Endothelial cell of umbilical vein (primary cell): ENCODE measurements at regions of chr1 and their contacts with region 1.

Region 1: GRCh38 chr1:32981003-32981901 is 16.6 kb upstream of the RNF19B start:
- DNase-seq: peak; percentile 96
- H3K4me3 ChIP-seq: no peak overlapping the region
- H3K27ac ChIP-seq: peak overlapping the region; percentile 88
- H3K4me1 ChIP-seq: peaks cover 27% of the 10 kb centered on the region
- H3K27me3 ChIP-seq: no peaks in the 10 kb centered on the region
- CTCF ChIP-seq: no peak
- POLR2A ChIP-seq: no peak

Region 2: DNA sequence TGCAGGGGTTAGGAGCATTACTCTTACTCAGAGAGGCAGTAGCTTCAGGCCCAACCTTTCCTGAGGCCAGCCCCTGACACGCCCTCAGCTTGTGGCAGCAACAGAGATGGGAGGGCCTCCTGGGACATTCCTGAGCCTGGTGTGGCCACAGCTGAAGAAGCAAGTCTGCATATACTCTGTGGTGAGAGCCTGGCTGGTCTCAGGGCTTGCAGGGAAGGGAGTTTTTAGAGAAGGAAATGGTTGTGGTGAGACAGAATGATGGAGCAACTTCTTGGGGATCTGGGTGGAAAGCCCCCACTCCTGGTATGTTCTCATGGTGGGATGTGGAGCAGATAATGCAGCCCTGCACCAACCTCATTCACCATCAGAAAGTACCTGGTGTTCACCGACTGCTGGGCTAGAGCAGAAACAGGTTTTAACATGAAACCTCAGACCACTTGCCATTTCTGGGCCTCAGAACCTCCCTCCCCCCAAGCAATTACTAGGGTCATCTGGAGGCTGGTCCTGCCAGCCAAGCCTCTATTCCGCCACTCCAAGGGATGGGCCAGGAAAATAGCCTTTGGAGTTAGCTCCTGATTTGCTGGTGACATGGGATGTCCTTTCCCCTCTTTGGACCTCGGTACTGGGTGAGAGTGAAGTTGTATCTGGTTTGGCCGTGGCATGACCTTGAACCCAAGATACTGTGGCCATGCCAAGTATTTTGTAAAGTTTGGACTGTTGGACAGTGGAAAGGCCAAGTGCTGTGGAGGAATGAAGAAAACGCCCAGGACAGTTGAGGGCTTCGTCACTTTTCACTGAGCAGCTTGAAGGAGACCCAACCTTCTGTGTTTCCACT is 11.5 kb after region 1 on chr1:
- CTCF ChIA-PET with region 1: interaction called, 6 read pairs
- POLR2A ChIA-PET with region 1: interaction called, 5 read pairs
- dilution Hi-C with region 1: no loop called
- intact Hi-C with region 1: loop called (anchors 1 kb)
- DNase-seq: peak; percentile 46
- H3K4me3 ChIP-seq: no peak overlapping the region
- H3K27ac ChIP-seq: peak overlapping the region; percentile 36
- H3K4me1 ChIP-seq: peaks cover 41% of the 10 kb centered on the region
- H3K27me3 ChIP-seq: no peaks in the 10 kb centered on the region
- CTCF ChIP-seq: no peak
- POLR2A ChIP-seq: no peak

Region 3: DNA sequence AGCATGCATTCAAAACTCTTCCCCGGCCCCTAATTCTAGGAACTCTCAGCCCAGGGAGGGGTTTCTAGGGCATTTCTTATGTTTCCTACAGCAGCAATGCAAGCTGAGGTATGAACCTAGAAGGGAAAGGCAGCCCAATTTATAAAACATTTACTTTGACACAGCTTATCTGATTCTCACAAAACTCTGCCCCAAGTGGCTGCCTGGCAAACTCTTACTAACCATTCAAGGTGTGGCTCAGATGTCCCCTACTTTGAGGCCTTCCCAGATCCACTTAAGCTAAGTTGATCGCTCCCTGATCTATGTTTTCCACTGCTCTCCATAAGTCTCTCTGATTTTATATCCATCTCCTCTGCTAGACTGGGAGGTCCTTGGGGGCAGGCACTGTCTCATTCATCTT is 20.0 kb after region 1 on chr1:
- CTCF ChIA-PET with region 1: interaction called, 22 read pairs
- POLR2A ChIA-PET with region 1: interaction called, 5 read pairs
- dilution Hi-C with region 1: no loop called
- intact Hi-C with region 1: loop called (anchors 1 kb)
- DNase-seq: no peak
- H3K4me3 ChIP-seq: no peak overlapping the region
- H3K27ac ChIP-seq: no peak overlapping the region
- H3K4me1 ChIP-seq: peaks cover 69% of the 10 kb centered on the region
- H3K27me3 ChIP-seq: no peaks in the 10 kb centered on the region
- CTCF ChIP-seq: peak in 1 of 2 donors; percentile 19
- POLR2A ChIP-seq: no peak